Activated CD4-positive, alpha-beta T cell treated with anti-CD3 and anti-CD28 coated beads, Interleukin-2, amount 10 ng/mL, durations not matched to agents 24 days and 14 days (primary cell): ENCODE measurements at regions of chr11 and their contacts with region 1.

Region 1: GRCh38 chr11:114059278-114059983 is at the start of gene ZBTB16:
- DNase-seq: peak; percentile 83
- H3K4me3 Mint-ChIP-seq: peak within 1 kb of the TSS; percentile 87
- H3K27ac Mint-ChIP-seq: peak within 1 kb of the TSS; percentile 68
- H3K4me1 Mint-ChIP-seq: peaks cover 7% of the 10 kb centered on the region
- H3K27me3 Mint-ChIP-seq: peaks cover 73% of the 10 kb centered on the region
- total RNA-seq, gene ZBTB16: 2.5 and 3.8 TPM in 2 replicates

Region 2: GRCh38 chr11:114073828-114074381 is 14.5 kb after region 1 on chr11:
- intact Hi-C with region 1: loop called (anchors 2 kb)
- DNase-seq: peak; percentile 62
- H3K4me3 Mint-ChIP-seq: no peak overlapping the region
- H3K27ac Mint-ChIP-seq: peak overlapping the region; percentile 78
- H3K4me1 Mint-ChIP-seq: peaks cover 40% of the 10 kb centered on the region
- H3K27me3 Mint-ChIP-seq: peaks cover 33% of the 10 kb centered on the region

Region 3: DNA sequence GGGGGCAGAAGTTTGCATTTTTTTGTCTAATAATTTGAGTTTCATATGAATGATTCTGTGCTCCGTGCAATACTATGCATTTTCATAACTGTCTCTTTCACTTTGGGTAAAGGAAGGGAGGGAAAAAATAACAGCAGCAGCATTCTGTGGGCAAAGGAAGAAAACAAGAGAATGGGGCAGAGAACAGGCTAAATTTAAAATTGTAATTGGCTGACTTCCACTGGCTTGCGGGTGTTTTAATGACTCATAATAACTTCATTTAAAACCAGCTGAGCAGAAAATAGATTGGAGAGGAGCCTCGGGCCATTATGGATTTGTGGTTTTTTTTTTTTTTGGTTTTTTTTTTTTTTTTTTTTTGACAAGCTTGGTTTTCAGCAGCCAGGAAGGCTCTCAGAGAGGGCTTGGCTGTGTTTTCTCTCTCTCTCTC is 107.5 kb after region 1 on chr11:
- intact Hi-C with region 1: loop called (anchors 5 kb)
- DNase-seq: peak; percentile 70
- H3K4me3 Mint-ChIP-seq: peak overlapping the region; percentile 60
- H3K27ac Mint-ChIP-seq: peak overlapping the region; percentile 82
- H3K4me1 Mint-ChIP-seq: peaks cover 62% of the 10 kb centered on the region
- H3K27me3 Mint-ChIP-seq: no peaks in the 10 kb centered on the region